ENCODE measurements at regions of chr9 and their contacts with region 1.

Region 1: DNA sequence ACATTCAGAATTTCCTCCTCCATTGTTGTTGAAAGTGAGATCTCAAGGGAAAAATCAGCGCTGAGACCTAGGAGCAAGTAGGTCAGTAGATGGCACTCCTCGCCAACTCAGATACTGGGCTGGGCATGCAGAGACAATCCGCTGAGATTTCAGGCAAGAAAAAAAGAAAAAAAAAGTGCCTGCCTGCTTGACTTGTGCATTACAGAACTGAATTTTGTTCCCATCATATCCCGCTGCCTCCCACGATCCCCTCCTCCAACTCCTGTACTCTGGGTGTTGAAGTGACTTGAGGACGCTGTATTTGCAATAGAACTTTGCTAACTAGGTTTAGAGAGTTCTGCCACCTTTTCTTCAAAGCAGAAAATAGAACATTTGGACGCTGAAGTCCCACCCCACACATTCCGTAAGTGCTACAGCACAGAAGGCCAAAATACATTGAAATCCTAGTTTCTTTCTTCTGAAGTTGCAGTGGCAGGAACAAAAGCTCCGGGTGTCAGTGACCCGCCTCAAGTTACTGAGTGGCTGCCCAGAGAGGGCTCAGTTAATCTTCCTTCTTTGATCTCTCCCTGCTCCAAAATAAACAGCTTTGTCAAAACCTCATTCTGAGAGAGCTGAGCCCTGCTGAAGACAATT is 265.8 kb downstream of the MLLT3 start:
- DNase-seq: peak; percentile 72
- H3K4me3 Mint-ChIP-seq: no peak overlapping the region
- H3K27ac Mint-ChIP-seq: no peak overlapping the region
- H3K4me1 Mint-ChIP-seq: peaks cover 61% of the 10 kb centered on the region
- H3K27me3 Mint-ChIP-seq: no peaks in the 10 kb centered on the region

Region 2: DNA sequence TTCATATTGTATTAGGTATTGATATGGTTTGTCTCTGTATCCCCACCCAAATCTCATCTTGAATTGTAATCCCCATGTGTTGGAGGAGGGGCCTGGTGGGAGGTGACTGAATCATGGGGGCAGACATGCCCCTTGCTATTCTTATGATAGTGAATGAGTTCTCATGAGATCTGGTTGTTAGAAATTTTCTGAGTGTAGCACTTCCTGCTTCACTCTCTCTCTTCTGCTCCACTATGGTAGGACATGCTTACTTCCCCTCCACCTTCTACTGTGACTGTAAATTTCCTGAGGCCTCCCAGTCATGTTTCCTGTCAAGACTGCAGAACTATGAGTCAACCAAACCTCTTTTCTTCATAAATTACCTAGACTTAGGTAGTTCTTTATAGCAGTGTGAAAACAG is 380.3 kb before region 1 on chr9:
- CTCF ChIA-PET with region 1: no interaction called
- POLR2A ChIA-PET with region 1: no interaction called
- intact Hi-C with region 1: loop called (anchors 2 kb)
- DNase-seq: peak; percentile 45
- H3K4me3 Mint-ChIP-seq: no peak overlapping the region
- H3K27ac Mint-ChIP-seq: peak overlapping the region; percentile 74
- H3K4me1 Mint-ChIP-seq: peaks cover 23% of the 10 kb centered on the region
- H3K27me3 Mint-ChIP-seq: no peaks in the 10 kb centered on the region

Region 3: GRCh38 chr9:20280330-20280729 is 76.2 kb before region 1 on chr9:
- CTCF ChIA-PET with region 1: no interaction called
- POLR2A ChIA-PET with region 1: no interaction called
- intact Hi-C with region 1: no loop called
- DNase-seq: no peak
- H3K4me3 Mint-ChIP-seq: no peak overlapping the region
- H3K27ac Mint-ChIP-seq: no peak overlapping the region
- H3K4me1 Mint-ChIP-seq: peaks cover 2% of the 10 kb centered on the region
- H3K27me3 Mint-ChIP-seq: no peaks in the 10 kb centered on the region

Region 4: GRCh38 chr9:20297646-20298084 is 58.9 kb before region 1 on chr9:
- CTCF ChIA-PET with region 1: no interaction called
- POLR2A ChIA-PET with region 1: no interaction called
- intact Hi-C with region 1: no loop called
- DNase-seq: no peak
- H3K4me3 Mint-ChIP-seq: no peak overlapping the region
- H3K27ac Mint-ChIP-seq: no peak overlapping the region
- H3K4me1 Mint-ChIP-seq: peaks cover 16% of the 10 kb centered on the region
- H3K27me3 Mint-ChIP-seq: no peaks in the 10 kb centered on the region

Region 5: DNA sequence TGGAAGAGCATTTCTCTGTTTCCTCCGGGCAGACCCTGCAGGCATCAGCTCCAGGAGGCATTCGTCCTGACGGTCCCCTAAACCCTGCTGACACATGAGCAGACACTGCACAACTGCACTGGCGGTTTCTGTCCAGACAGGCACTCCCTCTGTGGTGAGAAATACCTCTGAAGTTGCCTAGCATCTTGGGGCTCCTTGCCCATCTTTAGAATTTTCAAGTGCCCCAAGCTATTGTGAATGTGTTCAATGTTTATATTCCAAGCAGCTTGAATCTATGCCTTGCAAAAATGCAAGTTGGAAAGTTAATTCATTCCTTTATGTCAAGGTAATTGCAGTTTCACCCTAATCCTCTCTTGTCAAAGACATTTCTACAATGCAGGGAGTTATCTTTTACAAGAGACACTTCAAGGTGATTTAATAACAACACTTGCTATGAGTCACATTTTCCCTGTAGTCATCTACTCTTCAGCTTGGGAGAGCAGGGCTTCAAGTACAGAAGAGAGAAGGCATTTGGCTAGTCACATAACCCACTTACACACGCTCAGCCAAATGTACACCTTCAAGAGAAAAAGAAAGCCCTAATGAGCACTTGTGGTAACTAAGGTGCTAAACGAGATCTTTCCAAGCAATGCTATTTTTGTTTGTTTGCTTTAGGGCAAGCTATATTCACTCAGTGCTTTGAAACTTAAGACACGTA is 36.7 kb before region 1 on chr9:
- CTCF ChIA-PET with region 1: interaction called, 6 read pairs
- POLR2A ChIA-PET with region 1: no interaction called
- intact Hi-C with region 1: loop called (anchors 1 kb)
- DNase-seq: peak; percentile 48
- H3K4me3 Mint-ChIP-seq: no peak overlapping the region
- H3K27ac Mint-ChIP-seq: peak overlapping the region; percentile 63
- H3K4me1 Mint-ChIP-seq: peaks cover 80% of the 10 kb centered on the region
- H3K27me3 Mint-ChIP-seq: no peaks in the 10 kb centered on the region

Region 6: GRCh38 chr9:20558566-20559016 is 202.1 kb after region 1 on chr9:
- CTCF ChIA-PET with region 1: interaction called, 3 read pairs
- POLR2A ChIA-PET with region 1: no interaction called
- intact Hi-C with region 1: loop called (anchors 2 kb)
- DNase-seq: peak; percentile 60
- H3K4me3 Mint-ChIP-seq: no peak overlapping the region
- H3K27ac Mint-ChIP-seq: peak overlapping the region; percentile 65
- H3K4me1 Mint-ChIP-seq: peaks cover 86% of the 10 kb centered on the region
- H3K27me3 Mint-ChIP-seq: no peaks in the 10 kb centered on the region

Region 7: GRCh38 chr9:20941174-20941690 is 584.7 kb after region 1 on chr9:
- CTCF ChIA-PET with region 1: interaction called, 13 read pairs
- POLR2A ChIA-PET with region 1: no interaction called
- intact Hi-C with region 1: loop called (anchors 1 kb)
- DNase-seq: peak; percentile 60
- H3K4me3 Mint-ChIP-seq: no peak overlapping the region
- H3K27ac Mint-ChIP-seq: no peak overlapping the region
- H3K4me1 Mint-ChIP-seq: peaks cover 3% of the 10 kb centered on the region
- H3K27me3 Mint-ChIP-seq: no peaks in the 10 kb centered on the region

Region 8: DNA sequence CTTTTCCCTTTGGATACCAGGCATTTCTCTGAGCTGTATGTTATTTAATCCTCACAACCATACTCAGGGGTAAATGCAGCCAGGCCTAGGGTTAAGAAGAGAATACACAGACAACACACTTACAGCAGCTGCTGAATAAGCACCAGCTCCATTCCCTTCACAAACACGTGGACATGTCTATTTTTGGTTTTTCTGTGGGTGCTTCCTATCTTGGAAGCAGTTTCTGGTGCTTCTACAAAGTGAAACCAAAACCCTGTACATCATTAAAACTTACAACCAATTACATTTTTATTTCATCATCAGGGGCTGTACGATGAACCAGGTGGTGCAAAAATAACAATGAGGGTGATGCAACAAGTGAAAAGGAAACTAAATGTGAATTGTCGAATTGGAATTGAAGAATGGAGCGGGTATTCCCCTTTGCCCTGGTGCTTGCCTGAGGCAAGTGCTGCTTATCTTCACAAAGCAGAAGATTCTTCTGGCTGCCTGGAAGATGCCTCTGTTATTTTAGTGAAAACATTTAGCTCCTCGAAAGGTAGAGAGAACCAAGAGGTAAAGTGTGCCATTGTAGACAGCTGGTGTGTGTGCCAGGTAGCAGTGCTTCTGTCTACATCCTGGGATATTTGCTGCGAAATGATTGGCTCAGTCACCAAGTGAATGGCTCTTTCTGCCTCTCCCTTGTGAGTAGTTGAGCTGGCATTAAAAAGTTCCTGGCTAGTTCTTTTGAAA is 739.8 kb after region 1 on chr9:
- CTCF ChIA-PET with region 1: no interaction called
- POLR2A ChIA-PET with region 1: no interaction called
- intact Hi-C with region 1: loop called (anchors 5 kb)
- DNase-seq: peak; percentile 49
- H3K4me3 Mint-ChIP-seq: peak overlapping the region; percentile 73
- H3K27ac Mint-ChIP-seq: peak overlapping the region; percentile 85
- H3K4me1 Mint-ChIP-seq: peaks cover 34% of the 10 kb centered on the region
- H3K27me3 Mint-ChIP-seq: no peaks in the 10 kb centered on the region

Region 9: DNA sequence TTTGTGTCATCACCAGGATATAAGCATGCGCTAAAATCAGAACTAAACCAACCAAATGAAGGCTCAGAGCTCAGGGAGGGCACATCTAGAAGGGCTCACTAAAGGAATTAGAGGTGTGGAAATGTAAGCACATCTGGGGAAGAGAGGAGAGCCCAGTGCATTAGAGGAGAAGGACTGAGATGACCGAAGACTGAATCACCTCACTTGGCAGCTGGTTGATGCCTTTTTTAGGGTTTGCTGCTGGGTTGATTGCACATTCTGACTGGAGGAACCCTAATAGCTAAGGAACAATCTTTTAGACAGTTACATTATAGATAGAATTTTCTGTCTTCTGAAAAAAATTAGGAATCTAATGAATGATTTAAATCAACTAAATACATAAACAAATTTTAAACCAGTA is 818.2 kb after region 1 on chr9:
- CTCF ChIA-PET with region 1: no interaction called
- POLR2A ChIA-PET with region 1: no interaction called
- intact Hi-C with region 1: no loop called
- DNase-seq: no peak
- H3K4me3 Mint-ChIP-seq: no peak overlapping the region
- H3K27ac Mint-ChIP-seq: no peak overlapping the region
- H3K4me1 Mint-ChIP-seq: no peaks in the 10 kb centered on the region
- H3K27me3 Mint-ChIP-seq: no peaks in the 10 kb centered on the region

Measured in activated CD4-positive, alpha-beta memory T cell treated with anti-CD3 and anti-CD28 coated beads for 36 hours (primary cell).